Cardiac septum (tissue), 1 donor: ENCODE measurements at regions of chr1 and their contacts with region 1.

Region 1: DNA sequence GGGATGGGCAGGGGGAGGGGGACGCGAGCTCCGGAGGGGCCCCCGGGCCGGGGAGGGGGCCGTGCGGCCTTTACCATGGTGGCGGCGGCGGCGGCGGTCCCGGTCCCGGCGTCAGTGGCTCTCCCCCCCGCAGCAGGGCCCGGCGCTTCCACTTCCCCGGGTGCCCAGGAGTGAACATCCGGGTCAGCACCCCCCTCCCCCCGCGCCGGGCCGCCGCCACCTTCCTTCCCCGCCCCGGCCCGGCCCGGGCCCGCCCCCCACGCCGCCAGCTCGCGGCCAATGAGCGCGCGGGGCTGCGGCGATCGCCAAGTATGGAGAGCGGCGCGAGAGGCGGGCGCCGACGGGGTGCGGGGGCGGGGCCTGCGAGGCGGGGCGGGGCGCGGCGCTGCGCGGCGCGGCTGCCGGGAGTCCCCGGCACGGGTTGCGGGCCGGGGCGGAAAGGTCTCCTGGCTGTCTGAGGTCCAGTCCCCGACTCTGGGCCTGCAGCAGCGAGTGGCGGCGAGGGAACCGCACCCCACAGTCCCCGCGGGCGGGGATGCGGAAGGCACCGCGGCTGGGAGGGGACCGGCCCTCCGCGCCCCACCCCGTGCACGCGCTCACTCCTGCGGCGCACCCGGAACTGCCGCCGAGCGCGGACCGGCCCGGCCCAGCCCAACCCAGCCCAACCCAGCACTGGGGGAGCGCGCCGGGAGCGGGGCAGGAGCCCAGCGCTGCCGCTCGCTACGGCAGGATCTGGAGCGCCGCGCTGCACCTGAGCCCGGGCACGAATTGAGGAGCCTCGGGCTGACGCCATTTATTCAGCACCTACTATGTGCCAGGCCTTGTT is at the start of gene CAPZB:
- DNase-seq: peak; percentile 98
- total RNA-seq, gene CAPZB: 213 TPM

Region 2: DNA sequence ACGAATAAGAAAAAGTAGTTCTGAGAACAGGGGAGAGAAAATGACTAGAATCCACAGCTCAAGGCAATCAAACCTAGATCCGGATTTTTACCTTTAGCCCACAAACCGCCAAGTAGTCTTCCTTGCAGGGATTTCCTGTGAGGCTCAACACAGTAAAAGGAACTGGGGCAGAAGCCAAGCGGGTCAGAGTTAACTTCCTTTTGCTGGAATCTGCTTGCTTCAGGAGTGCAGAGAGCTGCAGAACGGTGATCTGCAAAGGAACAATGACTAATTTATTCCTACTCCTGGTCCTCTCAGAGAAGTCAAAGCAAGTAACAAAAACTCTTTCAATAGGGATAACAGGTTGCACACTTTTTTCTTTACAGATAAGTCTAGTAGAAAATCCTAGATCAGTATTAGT is 328.9 kb before region 1 on chr1:
- intact Hi-C with region 1: no loop called
- DNase-seq: no peak

Region 3: DNA sequence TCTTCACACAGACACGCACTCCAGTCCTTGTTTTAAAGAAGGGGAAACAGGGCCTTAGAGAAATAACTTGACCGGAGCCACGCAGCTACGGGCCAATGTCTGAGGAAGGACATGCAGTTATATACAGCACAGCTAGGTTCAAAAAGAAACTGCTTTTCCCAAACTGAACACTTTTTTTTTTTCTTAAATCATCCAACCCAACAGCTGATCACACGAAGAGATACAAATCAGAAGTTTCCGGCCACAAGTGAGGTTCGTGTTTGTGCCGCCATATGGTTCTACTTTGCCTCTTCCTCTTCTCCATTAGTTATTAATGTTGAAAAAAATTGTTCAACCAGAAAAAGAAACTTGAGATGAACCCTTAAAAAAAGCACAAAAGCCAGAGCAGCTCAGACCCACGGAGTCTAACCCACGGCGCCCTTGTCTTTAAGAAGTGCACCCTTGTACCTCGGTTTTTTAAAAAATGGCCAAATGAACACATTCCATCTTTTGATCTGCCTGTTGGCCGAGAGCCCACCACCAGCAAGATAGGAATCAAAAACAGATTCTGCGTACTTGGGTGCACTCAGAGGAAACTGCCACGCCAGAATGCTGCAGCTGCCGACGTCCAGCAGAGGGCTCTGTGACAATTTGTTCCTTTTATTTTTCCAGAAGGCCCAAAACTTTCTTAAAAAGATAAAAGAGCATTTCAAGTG is 94.5 kb before region 1 on chr1:
- intact Hi-C with region 1: loop called (anchors 5 kb)
- DNase-seq: no peak

Region 4: DNA sequence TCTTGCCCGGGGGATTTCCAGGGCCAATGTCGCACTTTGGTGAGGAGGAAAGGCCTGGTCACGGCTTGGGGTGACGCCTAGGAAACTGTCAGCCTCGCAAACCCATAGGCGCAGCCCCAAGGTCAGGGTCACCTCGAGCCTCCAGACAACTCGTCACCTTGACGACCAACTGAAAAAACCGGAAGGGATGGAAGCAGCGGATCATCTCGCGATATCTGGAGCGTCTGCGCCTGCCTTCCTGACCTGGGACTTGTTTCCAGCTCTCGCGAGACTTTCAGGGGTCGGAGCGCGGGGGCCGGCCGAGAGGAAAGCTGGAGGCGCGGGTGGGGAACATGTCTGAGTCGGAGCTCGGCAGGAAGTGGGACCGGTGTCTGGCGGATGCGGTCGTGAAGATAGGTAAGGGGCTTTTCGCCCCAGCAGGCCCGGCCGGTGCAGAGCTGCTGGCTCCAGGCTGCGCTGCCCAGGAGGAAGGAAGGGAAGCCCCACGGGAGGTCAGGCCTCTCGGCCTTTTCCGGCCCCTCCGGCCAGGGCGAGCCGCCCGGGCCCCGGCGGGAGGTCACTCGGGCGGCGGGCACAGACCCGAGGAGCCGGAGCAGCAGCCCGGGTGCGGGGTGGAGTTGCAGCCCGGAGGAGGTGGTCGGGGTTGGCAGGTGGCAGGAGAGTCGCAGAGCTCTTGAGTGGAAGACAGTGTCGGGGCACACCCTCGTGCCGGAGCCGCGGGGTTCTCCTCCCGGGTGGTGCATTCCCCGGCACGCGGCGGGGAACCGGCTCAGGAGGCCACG is 111.3 kb after region 1 on chr1:
- intact Hi-C with region 1: loop called (anchors 10 kb)
- DNase-seq: peak; percentile 97